ENCODE measurements at regions of chr1 and their contacts with region 1.

Region 1: GRCh38 chr1:235075188-235075926 is 53.3 kb downstream of the TOMM20 start:
- DNase-seq: peak; percentile 82
- H3K4me3 Mint-ChIP-seq: peak overlapping the region; percentile 69
- H3K27ac Mint-ChIP-seq: peak overlapping the region; percentile 100
- H3K4me1 Mint-ChIP-seq: peaks cover 31% of the 10 kb centered on the region
- H3K27me3 Mint-ChIP-seq: no peaks in the 10 kb centered on the region

Region 2: GRCh38 chr1:234599617-234600417 is 475.5 kb before region 1 on chr1:
- intact Hi-C with region 1: loop called (anchors 2 kb)
- DNase-seq: peak; percentile 92
- H3K4me3 Mint-ChIP-seq: peak overlapping the region; percentile 89
- H3K27ac Mint-ChIP-seq: peak overlapping the region; percentile 97
- H3K4me1 Mint-ChIP-seq: peaks cover 47% of the 10 kb centered on the region
- H3K27me3 Mint-ChIP-seq: no peaks in the 10 kb centered on the region

Region 3: GRCh38 chr1:234730770-234731568 is 344.4 kb before region 1 on chr1:
- intact Hi-C with region 1: loop called (anchors 1 kb)
- DNase-seq: peak; percentile 86
- H3K4me3 Mint-ChIP-seq: peak overlapping the region; percentile 68
- H3K27ac Mint-ChIP-seq: peak overlapping the region; percentile 96
- H3K4me1 Mint-ChIP-seq: peaks cover 77% of the 10 kb centered on the region
- H3K27me3 Mint-ChIP-seq: no peaks in the 10 kb centered on the region

Region 4: DNA sequence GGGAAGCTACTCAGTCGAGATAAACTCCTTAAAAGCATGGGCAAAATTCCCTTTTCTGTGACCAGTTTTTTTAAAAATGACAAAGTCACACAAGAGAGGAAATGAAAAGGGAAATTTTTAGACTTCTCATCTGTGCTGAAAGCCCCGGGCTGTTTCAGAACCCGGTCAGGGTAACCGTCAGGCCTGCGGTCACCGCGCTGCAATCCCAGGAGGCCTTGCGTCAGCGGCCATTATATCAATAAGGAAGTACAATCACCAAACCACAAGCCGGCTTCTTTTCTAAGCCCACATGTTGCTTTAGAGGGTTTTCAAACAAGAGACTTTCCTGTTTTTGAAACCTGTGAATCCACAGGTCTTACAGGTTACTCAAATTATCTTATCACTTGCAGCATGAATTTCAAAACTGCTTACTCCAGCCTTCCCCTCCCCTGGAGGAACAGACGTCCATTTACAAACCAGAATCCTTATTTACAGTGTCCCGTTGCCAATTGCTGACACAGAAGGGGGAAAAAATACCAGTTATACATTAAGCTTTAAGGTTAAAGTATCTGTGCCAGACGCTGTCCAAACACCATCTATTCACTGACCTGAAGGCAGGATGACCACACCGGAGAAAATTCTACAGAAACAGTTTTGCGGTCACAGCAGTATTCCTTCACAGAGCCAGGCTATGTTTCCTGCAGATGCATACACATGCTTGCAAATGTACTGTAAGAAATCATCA is 112.0 kb before region 1 on chr1:
- intact Hi-C with region 1: loop called (anchors 1 kb)
- DNase-seq: peak; percentile 96
- H3K4me3 Mint-ChIP-seq: peak overlapping the region; percentile 79
- H3K27ac Mint-ChIP-seq: peak overlapping the region; percentile 97
- H3K4me1 Mint-ChIP-seq: peaks cover 69% of the 10 kb centered on the region
- H3K27me3 Mint-ChIP-seq: no peaks in the 10 kb centered on the region

Region 5: GRCh38 chr1:234987415-234988154 is 87.8 kb before region 1 on chr1:
- intact Hi-C with region 1: loop called (anchors 1 kb)
- DNase-seq: peak; percentile 73
- H3K4me3 Mint-ChIP-seq: peak overlapping the region; percentile 66
- H3K27ac Mint-ChIP-seq: peak overlapping the region; percentile 98
- H3K4me1 Mint-ChIP-seq: peaks cover 71% of the 10 kb centered on the region
- H3K27me3 Mint-ChIP-seq: no peaks in the 10 kb centered on the region

Region 6: GRCh38 chr1:235050911-235051360 is 24.4 kb before region 1 on chr1:
- intact Hi-C with region 1: loop called (anchors 1 kb)
- DNase-seq: no peak
- H3K4me3 Mint-ChIP-seq: no peak overlapping the region
- H3K27ac Mint-ChIP-seq: peak overlapping the region; percentile 66
- H3K4me1 Mint-ChIP-seq: peaks cover 44% of the 10 kb centered on the region
- H3K27me3 Mint-ChIP-seq: no peaks in the 10 kb centered on the region

Measured in activated CD4-positive, alpha-beta T cell treated with anti-CD3 and anti-CD28 coated beads, Interleukin-2, amount 10 ng/mL, durations not matched to agents 24 days and 14 days (primary cell).